ENCODE measurements at regions of chr20 and their contacts with region 1.

Region 1: DNA sequence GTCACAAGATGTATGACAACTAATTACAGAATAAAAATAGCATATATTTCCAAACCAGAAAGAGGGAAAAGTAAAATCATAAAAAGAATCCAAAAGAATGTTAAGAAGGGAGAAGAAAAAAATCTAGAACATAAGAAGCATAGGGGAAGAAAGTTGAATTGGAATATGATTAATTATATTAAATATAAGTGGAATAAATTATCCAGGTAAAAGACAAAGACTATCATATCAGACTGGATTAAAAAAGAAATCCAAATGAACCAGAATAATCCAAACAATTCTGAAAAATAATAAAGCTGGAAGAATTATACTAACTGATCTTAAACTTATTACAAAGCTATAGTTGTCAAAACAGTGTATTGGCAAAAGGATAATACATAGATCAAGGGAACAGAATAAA is 23.6 kb downstream of the CSNK2A1 start:
- DNase-seq: no peak
- H3K4me3 Mint-ChIP-seq: no peak overlapping the region
- H3K27ac Mint-ChIP-seq: no peak overlapping the region
- H3K4me1 Mint-ChIP-seq: peaks cover 6% of the 10 kb centered on the region
- H3K27me3 Mint-ChIP-seq: no peaks in the 10 kb centered on the region
- CTCF ChIP-seq: no peak

Region 2: GRCh38 chr20:507761-508332 is 12.2 kb before region 1 on chr20:
- CTCF ChIA-PET with region 1: no interaction called
- POLR2A ChIA-PET with region 1: interaction called, 10 read pairs
- intact Hi-C with region 1: no loop called
- DNase-seq: no peak
- H3K4me3 Mint-ChIP-seq: no peak overlapping the region
- H3K27ac Mint-ChIP-seq: peak overlapping the region; percentile 3
- H3K4me1 Mint-ChIP-seq: peaks cover 24% of the 10 kb centered on the region
- H3K27me3 Mint-ChIP-seq: no peaks in the 10 kb centered on the region
- CTCF ChIP-seq: no peak

Region 3: GRCh38 chr20:805713-806112 is 285.7 kb after region 1 on chr20:
- CTCF ChIA-PET with region 1: no interaction called
- POLR2A ChIA-PET with region 1: no interaction called
- intact Hi-C with region 1: no loop called
- DNase-seq: peak; percentile 25
- H3K4me3 Mint-ChIP-seq: no peak overlapping the region
- H3K27ac Mint-ChIP-seq: no peak overlapping the region
- H3K4me1 Mint-ChIP-seq: no peaks in the 10 kb centered on the region
- H3K27me3 Mint-ChIP-seq: peaks cover 15% of the 10 kb centered on the region
- CTCF ChIP-seq: no peak